ENCODE measurements at regions of chr16 and their contacts with region 1.

Region 1: DNA sequence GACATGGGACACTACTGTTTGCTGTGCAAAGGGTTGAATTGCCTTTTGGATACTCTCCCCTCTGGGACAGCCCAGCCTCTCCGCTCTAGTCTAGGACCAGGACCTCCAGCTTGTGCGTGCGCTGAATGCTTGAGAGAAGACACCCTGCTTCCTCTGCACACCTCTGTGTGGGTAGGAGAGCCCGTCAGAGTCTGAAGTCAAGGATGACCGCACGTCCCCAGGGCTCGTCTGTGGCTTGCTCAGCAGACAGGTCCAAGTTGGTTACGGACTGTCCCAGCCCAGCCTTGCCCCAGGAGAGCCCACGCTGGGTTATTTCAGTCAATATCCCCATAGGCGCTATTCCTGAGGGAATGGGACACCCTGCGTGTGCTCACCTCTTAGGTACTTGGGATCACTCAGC is 3.7 kb downstream of the C16orf89 start:
- DNase-seq: no peak
- H3K4me3 ChIP-seq: no peak overlapping the region
- H3K27ac ChIP-seq: no peak overlapping the region
- H3K4me1 ChIP-seq: no peaks in the 10 kb centered on the region
- CTCF ChIP-seq: no peak

Region 2: DNA sequence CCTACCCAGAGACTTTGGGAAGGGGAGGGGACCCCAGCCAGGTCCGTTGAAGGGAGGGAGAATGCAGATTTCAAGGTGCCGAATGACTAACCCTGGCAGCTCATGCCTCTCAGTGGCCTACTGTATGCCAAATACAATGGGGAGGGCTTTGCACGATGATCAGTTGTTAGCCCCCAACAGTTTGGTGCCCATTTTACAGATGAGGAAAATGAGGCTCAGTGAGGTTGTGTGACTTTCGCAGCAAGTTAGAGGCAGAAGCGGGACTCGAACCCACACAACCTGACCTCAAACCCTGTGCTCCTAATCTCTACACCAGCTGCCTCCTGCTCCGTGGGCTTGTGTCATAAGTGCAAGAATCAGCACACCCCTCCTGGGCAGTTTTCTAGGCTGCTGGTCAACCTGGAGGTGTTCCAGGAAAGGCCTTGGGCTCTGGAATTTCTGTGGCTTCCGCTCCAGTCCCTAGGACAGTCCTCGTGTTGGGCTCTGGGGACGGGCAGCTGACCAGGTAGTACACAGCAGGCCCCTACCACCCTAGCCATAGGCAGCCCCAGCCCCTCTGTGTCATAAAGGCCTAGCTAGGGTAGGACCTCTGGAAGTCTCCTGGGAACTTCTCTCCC is 16.4 kb before region 1 on chr16:
- CTCF ChIA-PET with region 1: no interaction called
- POLR2A ChIA-PET with region 1: interaction called, 10 read pairs
- intact Hi-C with region 1: no loop called
- DNase-seq: no peak
- H3K4me3 ChIP-seq: no peak overlapping the region
- H3K27ac ChIP-seq: no peak overlapping the region
- H3K4me1 ChIP-seq: no peaks in the 10 kb centered on the region
- CTCF ChIP-seq: no peak

Measured in OCI-LY7 (cell line).